ENCODE measurements at regions of chr12 and their contacts with region 1.

Region 1: DNA sequence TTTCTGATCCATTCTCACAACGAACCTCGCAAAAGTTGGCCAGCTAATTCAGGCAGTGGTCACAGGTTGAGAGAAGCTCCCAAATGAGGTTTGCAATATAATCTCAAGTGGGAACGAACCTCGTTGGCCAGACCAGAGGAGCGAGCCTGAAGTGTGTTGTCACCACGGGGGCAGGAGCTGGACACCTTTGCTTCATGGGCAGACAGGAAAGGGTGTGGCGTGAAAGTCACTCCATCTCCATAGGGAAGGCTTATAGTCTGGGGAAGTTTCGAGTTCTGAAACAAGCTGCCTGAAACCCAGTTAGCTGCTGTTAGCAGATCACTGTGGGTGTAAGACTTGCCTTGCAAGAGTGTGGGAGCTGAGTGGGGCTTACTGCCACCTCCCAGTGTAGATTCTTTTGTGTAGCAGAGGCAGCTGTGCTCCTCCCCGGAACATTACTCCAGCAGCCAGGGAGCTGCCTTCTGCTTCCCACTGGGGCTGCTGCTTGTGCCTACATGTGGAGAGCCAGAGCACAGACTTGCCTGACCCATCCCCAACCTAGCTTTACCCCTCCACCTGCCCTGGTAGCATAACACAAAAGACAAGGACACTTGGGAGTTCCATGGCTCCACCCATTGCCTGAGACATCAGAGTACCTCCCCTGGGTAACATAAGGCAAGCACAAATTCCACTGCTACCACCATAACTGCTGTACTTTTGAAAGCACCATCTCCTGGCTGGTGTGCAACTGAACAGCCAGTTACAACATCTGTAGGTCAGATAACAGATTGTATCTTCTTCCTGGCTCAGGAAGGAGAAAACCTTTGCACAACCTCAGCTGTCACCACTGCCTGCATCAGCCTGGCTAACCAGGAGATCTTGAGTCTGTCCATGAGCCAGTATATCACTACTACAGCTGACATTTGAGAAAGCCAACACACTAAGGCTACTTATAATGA is 69.6 kb downstream of the ADAMTS20 start:
- DNase-seq: no peak
- ATAC-seq: no peak
- H3K4me3 ChIP-seq: no peak overlapping the region
- H3K4me3 Mint-ChIP-seq: no peak overlapping the region
- H3K27ac ChIP-seq: no peak overlapping the region
- H3K27ac Mint-ChIP-seq: no peak overlapping the region
- H3K4me1 ChIP-seq: no peaks in the 10 kb centered on the region
- H3K4me1 Mint-ChIP-seq: no peaks in the 10 kb centered on the region
- H3K27me3 ChIP-seq: peaks cover 0 to 2% of the 10 kb centered on the region in 2 experiments
- H3K27me3 Mint-ChIP-seq: no peaks in the 10 kb centered on the region

Region 2: DNA sequence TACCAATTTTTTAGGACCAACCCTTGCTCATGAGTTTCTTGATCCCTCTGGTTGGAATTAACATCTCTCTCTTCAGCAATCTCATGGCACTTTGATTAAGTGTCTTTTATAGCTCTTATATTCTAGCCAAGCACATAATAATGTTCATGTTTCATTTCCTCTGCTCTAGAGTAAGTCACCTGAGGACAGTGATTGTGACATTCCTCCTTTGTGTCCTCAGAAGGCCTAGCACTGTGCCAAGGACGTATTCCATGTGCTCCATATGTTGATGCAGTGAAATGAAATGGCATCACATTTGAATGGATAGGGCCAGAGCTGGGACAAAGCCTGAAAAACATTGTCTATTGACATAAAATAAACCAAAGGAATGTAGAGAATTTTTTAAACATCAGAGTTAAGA is 570.0 kb before region 1 on chr12:
- CTCF ChIA-PET with region 1: no interaction called
- POLR2A ChIA-PET with region 1: interaction called in 1 of 2 experiments, 11 read pairs
- DNase-seq: no peak
- ATAC-seq: no peak
- H3K4me3 ChIP-seq: no peak overlapping the region
- H3K4me3 Mint-ChIP-seq: no peak overlapping the region
- H3K27ac ChIP-seq: no peak overlapping the region
- H3K27ac Mint-ChIP-seq: no peak overlapping the region
- H3K4me1 ChIP-seq: no peaks in the 10 kb centered on the region
- H3K4me1 Mint-ChIP-seq: no peaks in the 10 kb centered on the region
- H3K27me3 ChIP-seq: no peaks in the 10 kb centered on the region
- H3K27me3 Mint-ChIP-seq: no peaks in the 10 kb centered on the region

Region 3: GRCh38 chr12:43378448-43378847 is 104.0 kb before region 1 on chr12:
- CTCF ChIA-PET with region 1: no interaction called
- POLR2A ChIA-PET with region 1: no interaction called
- DNase-seq: no peak
- ATAC-seq: no peak
- H3K4me3 ChIP-seq: no peak overlapping the region
- H3K4me3 Mint-ChIP-seq: no peak overlapping the region
- H3K27ac ChIP-seq: no peak overlapping the region
- H3K27ac Mint-ChIP-seq: no peak overlapping the region
- H3K4me1 ChIP-seq: no peaks in the 10 kb centered on the region
- H3K4me1 Mint-ChIP-seq: no peaks in the 10 kb centered on the region
- H3K27me3 ChIP-seq: no peaks in the 10 kb centered on the region
- H3K27me3 Mint-ChIP-seq: no peaks in the 10 kb centered on the region

Region 4: DNA sequence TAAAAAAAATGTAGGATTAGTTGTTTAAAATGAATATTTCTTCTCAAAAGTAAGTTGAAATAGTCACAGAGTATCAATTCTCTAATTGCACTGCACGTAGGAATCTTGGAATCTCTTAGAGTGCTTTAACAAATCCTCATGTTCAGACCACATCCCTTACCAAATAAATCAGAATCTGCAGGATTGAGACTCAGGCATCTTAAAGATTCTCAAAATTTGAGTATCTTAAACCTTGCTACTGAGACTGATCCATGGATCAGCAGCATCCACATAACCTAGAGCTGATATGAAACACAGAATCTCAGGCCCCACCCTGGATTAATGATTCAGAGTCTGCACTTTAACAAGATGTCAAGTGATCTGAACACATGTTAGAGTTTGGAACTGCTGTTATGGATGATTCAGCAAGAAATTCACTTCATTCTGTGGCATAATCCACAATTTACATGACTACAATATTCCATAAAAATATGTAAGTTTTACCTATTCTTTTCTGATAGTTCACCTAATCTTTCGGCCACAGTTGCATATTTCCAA is 10.9 kb after region 1 on chr12:
- CTCF ChIA-PET with region 1: no interaction called
- POLR2A ChIA-PET with region 1: no interaction called
- DNase-seq: no peak
- ATAC-seq: no peak
- H3K4me3 ChIP-seq: no peak overlapping the region
- H3K4me3 Mint-ChIP-seq: no peak overlapping the region
- H3K27ac ChIP-seq: no peak overlapping the region
- H3K27ac Mint-ChIP-seq: no peak overlapping the region
- H3K4me1 ChIP-seq: no peaks in the 10 kb centered on the region
- H3K4me1 Mint-ChIP-seq: no peaks in the 10 kb centered on the region
- H3K27me3 ChIP-seq: no peaks in the 10 kb centered on the region
- H3K27me3 Mint-ChIP-seq: no peaks in the 10 kb centered on the region

Measured in T-cell (primary cell).